ENCODE measurements at regions of chr6 and their contacts with region 1.

Region 1: DNA sequence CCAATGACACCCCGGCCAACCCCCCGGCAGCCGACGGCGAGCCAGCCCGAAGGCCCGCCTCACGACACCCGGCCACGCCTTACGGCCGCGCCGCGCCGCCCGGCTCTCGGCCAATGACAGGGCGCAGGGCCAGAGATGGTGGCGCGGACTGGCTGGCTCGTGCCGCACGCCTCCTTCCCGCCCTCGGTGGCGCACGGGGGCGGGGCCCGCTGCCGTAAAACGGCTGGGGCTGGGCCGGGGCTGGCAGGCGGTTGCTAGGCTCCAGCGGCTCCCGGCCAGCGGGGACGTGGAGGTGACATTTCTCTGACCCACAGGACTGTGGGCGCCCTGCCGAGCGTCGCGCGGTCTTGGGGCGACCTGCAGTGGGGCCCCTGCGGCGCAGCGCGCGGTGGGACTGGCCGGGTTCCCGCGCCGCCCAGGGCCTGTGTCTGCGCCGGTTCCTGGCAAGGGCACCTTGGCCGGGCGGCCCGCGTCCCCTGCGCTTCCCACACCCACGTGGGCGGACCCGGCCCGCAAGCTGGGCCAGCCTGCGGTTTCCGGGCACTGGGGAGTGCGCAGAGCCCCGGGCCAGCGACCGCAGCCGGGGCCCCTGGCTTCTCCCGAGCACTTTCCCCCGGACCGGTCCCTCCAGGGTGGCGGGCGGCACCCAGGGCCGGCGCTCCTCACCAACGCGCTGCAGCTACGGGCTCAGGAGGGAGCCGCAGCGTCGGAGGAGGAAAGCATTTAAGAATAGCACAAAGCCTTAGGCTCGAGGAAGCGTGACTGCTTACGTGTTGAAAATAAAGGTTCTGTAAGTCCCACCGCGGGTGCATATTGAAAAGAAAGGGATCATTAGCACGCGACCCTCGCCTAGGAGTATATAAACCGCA is at the start of gene MPC1:
- DNase-seq: peak; percentile 91 to 95
- H3K4me3 ChIP-seq: peak within 1 kb of the TSS; percentile 60
- H3K4me1 ChIP-seq: peaks cover 10% of the 10 kb centered on the region
- H3K27me3 ChIP-seq: no peaks in the 10 kb centered on the region

Region 2: DNA sequence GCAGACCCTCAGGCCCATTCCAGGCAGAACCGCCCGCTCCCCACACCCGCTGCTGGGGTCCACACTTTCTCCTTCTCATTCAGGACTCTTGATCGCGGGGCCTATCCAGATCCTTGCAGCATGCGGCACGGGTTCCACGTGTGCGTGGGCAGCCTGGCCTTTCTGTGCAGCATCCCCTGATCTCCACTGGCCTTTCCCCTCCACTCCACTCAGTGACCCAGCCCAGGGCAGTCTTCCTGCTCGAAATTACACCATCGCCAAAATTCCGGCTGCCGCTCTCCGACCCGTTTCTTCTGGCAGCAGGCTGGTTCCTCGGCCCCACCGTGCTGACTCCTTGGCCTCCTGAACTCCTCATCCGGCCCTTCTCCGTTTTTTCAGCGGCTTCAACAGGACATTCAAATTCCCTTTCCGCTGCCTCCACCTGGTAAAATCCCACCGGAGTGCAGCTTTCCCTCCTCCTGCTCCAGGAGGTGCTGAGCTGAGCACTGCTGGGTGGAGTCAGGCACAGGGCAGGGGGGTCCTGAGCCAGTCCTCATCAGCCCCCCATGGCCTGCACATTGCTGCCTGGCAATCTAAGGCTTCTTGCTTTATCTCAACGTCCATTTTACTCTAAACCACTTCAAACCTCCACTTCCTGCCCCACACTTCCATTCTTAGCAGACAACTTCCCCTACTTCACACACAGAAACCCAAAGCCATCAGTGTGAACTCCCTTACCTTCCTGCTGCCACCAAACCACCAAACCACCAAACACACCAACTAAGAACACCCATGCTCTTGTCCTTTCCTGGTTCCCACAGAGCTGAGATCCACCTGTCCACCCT is 49.8 kb before region 1 on chr6:
- in situ Hi-C with region 1: loop called (anchors 10 kb)
- DNase-seq: no peak
- H3K4me3 ChIP-seq: no peak overlapping the region
- H3K4me1 ChIP-seq: peaks cover 25% of the 10 kb centered on the region
- H3K27me3 ChIP-seq: no peaks in the 10 kb centered on the region

Region 3: DNA sequence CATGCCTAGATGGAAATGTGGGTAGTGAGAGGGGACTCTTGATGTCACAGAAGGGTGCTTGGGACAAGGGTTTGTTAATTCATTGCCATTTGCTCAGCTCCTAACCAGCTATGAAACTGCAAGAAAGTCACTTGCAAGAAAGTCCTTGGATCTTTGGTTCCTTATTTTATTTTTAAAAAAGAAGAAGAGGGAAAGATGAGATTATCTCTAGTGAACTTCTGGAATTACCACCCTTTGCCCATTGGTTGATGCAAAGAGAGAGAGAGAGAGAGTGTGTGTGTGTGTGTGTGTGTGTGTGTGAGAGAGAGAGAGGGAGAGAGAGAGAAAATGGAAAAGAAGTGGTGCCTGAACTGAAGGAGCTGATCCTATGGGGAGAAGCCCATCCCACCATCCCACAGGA is 36.2 kb before region 1 on chr6:
- in situ Hi-C with region 1: no loop called
- DNase-seq: no peak
- H3K4me3 ChIP-seq: no peak overlapping the region
- H3K4me1 ChIP-seq: peaks cover 7% of the 10 kb centered on the region
- H3K27me3 ChIP-seq: no peaks in the 10 kb centered on the region

Region 4: DNA sequence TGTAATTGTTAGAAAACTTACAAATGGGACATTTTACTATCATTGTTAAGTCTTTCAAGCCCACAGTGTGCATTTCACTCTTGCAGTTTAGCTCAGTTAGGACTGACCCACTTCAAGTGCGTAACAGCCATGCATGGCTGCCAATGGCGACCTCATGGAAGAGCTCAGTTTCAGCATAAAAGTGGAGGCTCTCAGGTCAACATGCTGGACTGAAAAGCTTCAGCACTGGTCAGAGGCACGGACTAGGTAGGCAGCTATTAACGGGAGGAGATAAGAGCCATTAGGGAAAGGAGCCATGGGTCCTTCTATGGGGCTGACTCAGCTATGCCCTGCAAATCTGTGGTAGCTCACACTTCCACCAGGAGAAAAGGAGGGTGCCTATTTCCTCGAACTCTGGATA is 1043.5 kb after region 1 on chr6:
- in situ Hi-C with region 1: no loop called
- DNase-seq: no peak
- H3K4me3 ChIP-seq: no peak overlapping the region
- H3K4me1 ChIP-seq: peaks cover 16% of the 10 kb centered on the region
- H3K27me3 ChIP-seq: no peaks in the 10 kb centered on the region

Measured in HAP-1 (cell line).